Prostate gland (tissue), 2 donors: ENCODE measurements at regions of chr11 and their contacts with region 1.

Region 1: DNA sequence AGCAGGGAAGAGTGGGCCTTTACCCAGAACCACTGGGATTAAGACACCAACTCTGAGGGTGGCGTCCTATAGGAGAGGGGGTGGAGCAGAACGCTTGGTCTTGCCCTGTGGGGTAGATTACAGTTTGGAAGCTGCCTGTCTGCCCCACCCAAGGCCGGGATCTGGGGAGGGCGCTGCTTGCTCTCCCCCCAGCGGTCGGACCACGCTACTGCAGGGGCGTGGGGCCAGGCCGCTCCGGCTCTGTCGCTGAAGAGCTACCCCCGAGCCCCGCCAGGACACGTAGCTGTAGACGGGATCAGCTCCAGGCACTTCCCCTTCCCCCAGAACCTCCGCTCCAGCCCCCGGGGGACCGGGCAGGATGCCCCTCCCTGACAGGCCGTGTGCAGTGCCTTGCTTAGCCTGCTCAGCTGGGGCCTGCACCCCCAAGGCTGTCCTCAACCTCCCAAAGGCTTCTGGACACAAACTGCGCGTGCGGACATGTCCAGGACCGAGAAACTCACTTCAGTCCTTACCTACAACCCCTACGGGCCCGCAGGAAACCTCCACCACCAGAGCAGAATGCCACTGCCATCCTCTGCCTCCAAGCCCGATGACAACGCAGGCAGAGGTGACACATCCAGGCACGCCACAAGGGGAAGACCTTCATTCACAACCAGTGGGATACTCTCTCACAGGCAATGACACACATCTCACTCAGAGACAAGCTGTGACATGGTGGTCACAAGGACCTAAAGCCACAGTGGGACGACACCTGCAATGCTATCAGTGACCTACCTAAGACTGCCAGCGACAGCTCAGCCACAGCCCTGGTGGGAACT is 3.6 kb downstream of the AHNAK start:
- DNase-seq: peak; percentile 64
- H3K4me3 ChIP-seq: peak overlapping the region; percentile 93 to 98
- H3K27ac ChIP-seq: peak overlapping the region; percentile 97 to 99
- H3K4me1 ChIP-seq: peaks cover 53% of the 10 kb centered on the region
- H3K27me3 ChIP-seq: no peaks in the 10 kb centered on the region
- CTCF ChIP-seq: peak; percentile 98 to 99 (median 98)
- POLR2A ChIP-seq: no peak

Region 2: GRCh38 chr11:62394825-62395538 is 148.0 kb before region 1 on chr11:
- intact Hi-C with region 1: loop called (anchors 2 kb)
- DNase-seq: peak; percentile 82
- H3K4me3 ChIP-seq: peak overlapping the region; percentile 7 to 12
- H3K27ac ChIP-seq: peak overlapping the region; percentile 62 to 69
- H3K4me1 ChIP-seq: peaks cover 10% of the 10 kb centered on the region
- H3K27me3 ChIP-seq: no peaks in the 10 kb centered on the region
- CTCF ChIP-seq: peak; percentile 41 to 82 (median 80)
- POLR2A ChIP-seq: no peak

Region 3: DNA sequence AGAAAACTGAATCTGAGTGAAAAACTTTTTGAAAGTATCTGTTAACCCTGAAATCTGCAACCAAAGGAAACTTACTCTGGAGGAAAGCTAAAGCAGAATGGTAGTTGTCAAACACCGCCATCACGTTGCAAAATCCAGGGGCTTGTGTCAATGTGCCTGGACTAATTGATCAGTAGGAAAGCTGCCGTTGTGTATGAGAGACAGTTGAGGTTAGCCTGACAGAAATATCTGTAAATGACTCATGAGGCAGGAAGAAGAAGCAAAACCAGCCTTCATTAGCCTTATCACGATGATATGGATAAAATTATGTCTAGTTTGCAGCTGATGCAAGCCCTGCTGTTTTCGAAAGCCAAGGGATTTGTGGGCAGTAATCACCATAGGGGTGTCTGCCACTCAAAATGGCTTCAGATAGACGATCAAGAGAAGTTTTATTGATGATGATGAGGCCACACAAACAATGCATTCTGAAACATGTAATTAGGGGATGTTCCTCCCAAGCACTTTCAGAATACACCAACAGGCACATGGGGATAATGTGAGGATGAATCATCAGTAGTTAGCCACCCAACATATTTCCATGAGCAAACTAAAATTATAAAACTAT is 115.2 kb before region 1 on chr11:
- intact Hi-C with region 1: loop called (anchors 2 kb)
- DNase-seq: no peak
- H3K4me3 ChIP-seq: no peak overlapping the region
- H3K27ac ChIP-seq: no peak overlapping the region
- H3K4me1 ChIP-seq: no peaks in the 10 kb centered on the region
- H3K27me3 ChIP-seq: no peaks in the 10 kb centered on the region
- CTCF ChIP-seq: no peak
- POLR2A ChIP-seq: no peak

Region 4: GRCh38 chr11:62445314-62445740 is 97.6 kb before region 1 on chr11:
- intact Hi-C with region 1: loop called (anchors 5 kb)
- DNase-seq: peak; percentile 66
- H3K4me3 ChIP-seq: no peak overlapping the region
- H3K27ac ChIP-seq: peak overlapping the region; percentile 57 to 73
- H3K4me1 ChIP-seq: peaks cover 10% of the 10 kb centered on the region
- H3K27me3 ChIP-seq: no peaks in the 10 kb centered on the region
- CTCF ChIP-seq: no peak
- POLR2A ChIP-seq: no peak

Region 5: DNA sequence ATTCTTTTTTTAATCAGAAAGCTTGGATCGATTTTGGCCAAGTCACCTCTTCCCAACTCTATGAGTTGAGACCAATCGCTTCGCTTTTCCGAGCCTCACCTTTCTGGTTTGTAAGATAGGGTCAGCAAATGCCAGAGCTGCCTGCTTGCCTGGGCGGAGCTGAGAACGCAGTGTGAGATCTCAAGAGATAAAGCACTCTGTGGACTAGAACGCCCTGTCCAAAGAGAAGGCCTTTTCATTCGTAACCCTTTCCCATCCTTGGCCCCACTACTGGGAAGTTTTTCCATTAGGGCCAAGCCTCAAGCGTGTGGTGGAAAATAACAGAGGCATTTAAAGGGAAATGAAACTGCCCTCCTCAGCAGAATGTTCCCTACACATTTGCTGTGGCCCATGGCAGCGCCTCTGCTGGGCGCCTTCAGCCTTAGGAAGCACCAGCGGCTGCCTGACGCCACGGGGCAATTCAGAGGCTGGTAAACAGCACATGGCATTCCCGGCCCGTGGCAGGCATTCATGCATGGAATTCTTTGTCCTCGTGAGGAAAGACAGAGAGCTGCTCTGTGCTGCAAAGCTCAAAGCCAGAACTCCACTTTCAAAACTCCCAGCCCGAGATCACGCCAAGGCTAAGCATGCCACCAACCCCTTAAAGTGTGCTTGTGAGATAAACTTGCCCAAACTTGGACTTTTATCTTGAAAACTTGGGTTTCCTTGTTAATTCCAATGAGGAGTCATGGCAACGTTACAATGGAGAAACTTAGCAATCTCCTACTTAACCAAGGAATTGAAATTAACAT is 34.5 kb before region 1 on chr11:
- intact Hi-C with region 1: loop called (anchors 5 kb)
- DNase-seq: peak; percentile 84
- H3K4me3 ChIP-seq: peak overlapping the region in 1 of 2 donors; percentile 15
- H3K27ac ChIP-seq: peak overlapping the region; percentile 75 to 91
- H3K4me1 ChIP-seq: peaks cover 22% of the 10 kb centered on the region
- H3K27me3 ChIP-seq: no peaks in the 10 kb centered on the region
- CTCF ChIP-seq: peak in 3 of 4 experiments; percentile 40 to 73 (median 63)
- POLR2A ChIP-seq: no peak

Region 6: DNA sequence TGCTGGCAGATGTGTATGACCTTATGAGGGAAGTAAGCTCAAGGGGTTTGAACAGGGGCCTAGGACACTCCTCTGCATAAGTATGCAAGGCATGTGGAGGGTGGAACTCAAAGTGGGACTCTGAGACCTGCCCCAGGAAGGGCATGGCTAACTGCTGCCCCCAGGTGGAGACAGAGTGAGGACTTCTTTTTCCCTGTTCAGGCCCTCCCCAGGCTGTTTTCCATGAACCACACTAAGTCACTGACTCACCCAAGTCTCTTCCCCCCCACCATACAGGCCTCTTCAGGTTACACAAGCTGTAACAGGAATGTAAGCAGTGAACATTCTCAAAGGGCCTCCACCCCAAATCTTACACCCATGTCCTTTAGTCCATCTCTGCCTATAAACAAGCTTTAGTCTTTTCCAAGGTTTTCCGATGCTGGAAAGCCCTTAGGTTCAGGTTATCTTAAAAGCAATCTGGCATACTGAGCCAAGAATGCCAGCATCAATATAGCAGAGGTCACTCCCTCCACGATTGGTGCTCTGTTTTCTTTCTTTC is 17.7 kb after region 1 on chr11:
- intact Hi-C with region 1: loop called (anchors 2 kb)
- DNase-seq: peak; percentile 95
- H3K4me3 ChIP-seq: no peak overlapping the region
- H3K27ac ChIP-seq: peak overlapping the region; percentile 71 to 79
- H3K4me1 ChIP-seq: peaks cover 16% of the 10 kb centered on the region
- H3K27me3 ChIP-seq: no peaks in the 10 kb centered on the region
- CTCF ChIP-seq: peak; percentile 73 to 95 (median 91)
- POLR2A ChIP-seq: no peak

Region 7: GRCh38 chr11:62612366-62613290 is 69.7 kb after region 1 on chr11 and contains the starts of genes EML3 and ROM1:
- intact Hi-C with region 1: loop called (anchors 5 kb)
- DNase-seq: peak; percentile 76
- H3K4me3 ChIP-seq: peak within 1 kb of the TSS; percentile 75
- H3K27ac ChIP-seq: peak within 1 kb of the TSS; percentile 97 to 98
- H3K4me1 ChIP-seq: peaks cover 3% of the 10 kb centered on the region
- H3K27me3 ChIP-seq: no peaks in the 10 kb centered on the region
- CTCF ChIP-seq: peak; percentile 90 to 97 (median 92)
- POLR2A ChIP-seq: peak; percentile 7
- total RNA-seq, gene EML3: 50.2 to 80.1 TPM
- total RNA-seq, gene ROM1: 8.0 to 12.7 TPM